ENCODE measurements at regions of chr3 and their contacts with region 1.

Region 1: GRCh38 chr3:184538600-184539431 is 22.8 kb upstream of the EPHB3 start:
- DNase-seq: no peak
- ATAC-seq: no peak
- H3K4me3 Mint-ChIP-seq: no peak overlapping the region
- H3K27ac Mint-ChIP-seq: no peak overlapping the region
- H3K4me1 Mint-ChIP-seq: peaks cover 1% of the 10 kb centered on the region
- H3K27me3 Mint-ChIP-seq: peaks cover 23% of the 10 kb centered on the region

Region 2: GRCh38 chr3:184491867-184492615 is 46.8 kb before region 1 on chr3:
- CTCF ChIA-PET with region 1: no interaction called
- POLR2A ChIA-PET with region 1: no interaction called
- DNase-seq: no peak
- ATAC-seq: no peak
- H3K4me3 Mint-ChIP-seq: no peak overlapping the region
- H3K27ac Mint-ChIP-seq: no peak overlapping the region
- H3K4me1 Mint-ChIP-seq: peaks cover 6% of the 10 kb centered on the region
- H3K27me3 Mint-ChIP-seq: peaks cover 49% of the 10 kb centered on the region

Region 3: GRCh38 chr3:184523825-184524615 is 14.8 kb before region 1 on chr3:
- CTCF ChIA-PET with region 1: interaction called, 10 read pairs
- POLR2A ChIA-PET with region 1: no interaction called
- DNase-seq: peak; percentile 33
- ATAC-seq: peak; percentile 54
- H3K4me3 Mint-ChIP-seq: no peak overlapping the region
- H3K27ac Mint-ChIP-seq: no peak overlapping the region
- H3K4me1 Mint-ChIP-seq: peaks cover 16% of the 10 kb centered on the region
- H3K27me3 Mint-ChIP-seq: peaks cover 38% of the 10 kb centered on the region

Region 4: GRCh38 chr3:184659797-184660306 is 121.0 kb after region 1 on chr3:
- CTCF ChIA-PET with region 1: no interaction called
- POLR2A ChIA-PET with region 1: no interaction called
- DNase-seq: no peak
- ATAC-seq: no peak
- H3K4me3 Mint-ChIP-seq: no peak overlapping the region
- H3K27ac Mint-ChIP-seq: no peak overlapping the region
- H3K4me1 Mint-ChIP-seq: peaks cover 6% of the 10 kb centered on the region
- H3K27me3 Mint-ChIP-seq: peaks cover 4% of the 10 kb centered on the region

Region 5: GRCh38 chr3:184874709-184875644 is 336.2 kb after region 1 on chr3:
- CTCF ChIA-PET with region 1: no interaction called
- POLR2A ChIA-PET with region 1: no interaction called
- DNase-seq: peak; percentile 27
- ATAC-seq: no peak
- H3K4me3 Mint-ChIP-seq: no peak overlapping the region
- H3K27ac Mint-ChIP-seq: no peak overlapping the region
- H3K4me1 Mint-ChIP-seq: peaks cover 12% of the 10 kb centered on the region
- H3K27me3 Mint-ChIP-seq: no peaks in the 10 kb centered on the region